Activated CD4-positive, alpha-beta memory T cell treated with anti-CD3 and anti-CD28 coated beads for 36 hours (primary cell): ENCODE measurements at regions of chr12 and their contacts with region 1.

Region 1: DNA sequence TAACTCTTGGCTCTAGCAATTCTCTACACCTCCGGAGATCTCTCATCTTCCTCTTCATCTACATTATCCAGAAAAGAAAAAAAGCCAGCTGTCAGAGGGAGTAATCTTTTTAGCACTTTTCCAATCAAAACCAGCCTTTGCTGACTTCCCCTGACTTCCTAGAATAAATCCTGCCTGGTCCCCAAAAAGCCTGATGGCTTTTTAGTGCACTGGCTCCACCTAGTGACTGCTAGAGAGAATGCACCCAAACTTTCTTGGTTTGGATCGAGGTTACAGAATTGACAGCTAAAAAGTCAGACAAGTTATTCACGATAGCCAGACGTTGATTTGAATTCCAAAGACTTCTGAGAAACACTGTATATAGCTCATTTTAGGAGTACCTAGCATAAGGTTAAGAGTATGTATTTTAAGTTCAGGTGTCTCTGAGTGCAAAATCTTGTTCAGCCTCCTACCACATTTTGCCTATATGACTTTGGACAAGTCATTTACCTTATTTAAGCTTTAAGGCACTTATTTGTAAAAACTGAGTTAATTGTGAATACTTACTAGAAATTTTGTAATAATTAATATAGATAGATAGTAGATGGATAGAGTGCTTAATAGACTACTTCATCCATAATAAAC is 185.7 kb upstream of the GRIN2B start:
- DNase-seq: peak; percentile 53
- H3K4me3 Mint-ChIP-seq: no peak overlapping the region
- H3K27ac Mint-ChIP-seq: no peak overlapping the region
- H3K4me1 Mint-ChIP-seq: no peaks in the 10 kb centered on the region
- H3K27me3 Mint-ChIP-seq: peaks cover 4% of the 10 kb centered on the region

Region 2: GRCh38 chr12:13864081-13864673 is 302.9 kb before region 1 on chr12:
- CTCF ChIA-PET with region 1: interaction called, 48 read pairs
- POLR2A ChIA-PET with region 1: no interaction called
- intact Hi-C with region 1: loop called (anchors 1 kb)
- DNase-seq: peak; percentile 67
- H3K4me3 Mint-ChIP-seq: no peak overlapping the region
- H3K27ac Mint-ChIP-seq: no peak overlapping the region
- H3K4me1 Mint-ChIP-seq: no peaks in the 10 kb centered on the region
- H3K27me3 Mint-ChIP-seq: peaks cover 8% of the 10 kb centered on the region

Region 3: DNA sequence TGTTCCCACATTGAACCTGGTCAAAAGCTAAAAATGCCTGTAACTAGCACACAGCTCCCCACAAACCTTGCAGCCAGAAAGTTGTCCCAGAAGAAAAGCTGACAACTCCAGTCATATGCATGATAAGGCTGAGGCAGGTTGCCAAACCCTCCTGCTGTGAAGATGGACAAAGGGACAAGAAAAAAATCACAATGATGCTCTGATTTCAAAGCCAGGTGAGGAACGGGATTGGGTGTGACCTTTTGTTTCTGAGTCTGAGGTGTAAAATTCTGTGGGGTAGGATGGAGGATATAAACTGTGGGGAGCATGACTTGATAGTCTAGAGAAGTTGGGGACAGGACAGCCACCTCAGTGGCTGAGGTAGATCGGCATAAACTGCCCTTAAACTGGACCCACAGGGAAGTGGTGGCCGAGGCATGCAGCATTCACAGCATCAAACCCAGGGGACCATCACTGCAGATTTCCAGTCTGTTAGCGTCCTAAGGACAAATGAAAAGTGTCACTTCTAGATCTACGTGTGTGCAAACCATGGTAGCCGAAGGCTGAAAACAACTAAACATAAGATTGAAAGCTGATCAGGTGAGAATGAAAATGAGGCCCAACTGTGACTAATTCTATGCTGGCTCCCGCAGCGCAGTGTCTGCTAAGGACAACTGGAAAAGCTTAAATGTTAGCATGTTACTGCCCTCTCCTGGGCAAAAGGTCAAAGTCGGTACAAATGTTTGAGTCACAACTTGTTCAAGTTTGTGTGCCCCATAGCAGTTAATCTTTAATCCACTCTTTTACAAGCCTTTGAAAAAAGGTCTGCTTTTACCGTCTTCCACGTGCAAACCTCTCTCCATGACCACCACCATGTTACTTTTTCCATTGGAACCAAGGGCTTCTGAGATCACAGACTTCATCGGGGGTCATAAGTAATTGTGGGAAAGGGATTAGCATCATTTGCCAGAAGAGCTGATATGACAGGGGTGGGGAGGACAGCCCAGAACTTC is 225.6 kb before region 1 on chr12:
- CTCF ChIA-PET with region 1: no interaction called
- POLR2A ChIA-PET with region 1: no interaction called
- intact Hi-C with region 1: no loop called
- DNase-seq: peak; percentile 33
- H3K4me3 Mint-ChIP-seq: no peak overlapping the region
- H3K27ac Mint-ChIP-seq: no peak overlapping the region
- H3K4me1 Mint-ChIP-seq: no peaks in the 10 kb centered on the region
- H3K27me3 Mint-ChIP-seq: peaks cover 12% of the 10 kb centered on the region

Region 4: GRCh38 chr12:14185427-14186192 is 18.5 kb after region 1 on chr12:
- CTCF ChIA-PET with region 1: interaction called, 19 read pairs
- POLR2A ChIA-PET with region 1: no interaction called
- intact Hi-C with region 1: no loop called
- DNase-seq: peak; percentile 24
- H3K4me3 Mint-ChIP-seq: no peak overlapping the region
- H3K27ac Mint-ChIP-seq: no peak overlapping the region
- H3K4me1 Mint-ChIP-seq: no peaks in the 10 kb centered on the region
- H3K27me3 Mint-ChIP-seq: peaks cover 6% of the 10 kb centered on the region

Region 5: DNA sequence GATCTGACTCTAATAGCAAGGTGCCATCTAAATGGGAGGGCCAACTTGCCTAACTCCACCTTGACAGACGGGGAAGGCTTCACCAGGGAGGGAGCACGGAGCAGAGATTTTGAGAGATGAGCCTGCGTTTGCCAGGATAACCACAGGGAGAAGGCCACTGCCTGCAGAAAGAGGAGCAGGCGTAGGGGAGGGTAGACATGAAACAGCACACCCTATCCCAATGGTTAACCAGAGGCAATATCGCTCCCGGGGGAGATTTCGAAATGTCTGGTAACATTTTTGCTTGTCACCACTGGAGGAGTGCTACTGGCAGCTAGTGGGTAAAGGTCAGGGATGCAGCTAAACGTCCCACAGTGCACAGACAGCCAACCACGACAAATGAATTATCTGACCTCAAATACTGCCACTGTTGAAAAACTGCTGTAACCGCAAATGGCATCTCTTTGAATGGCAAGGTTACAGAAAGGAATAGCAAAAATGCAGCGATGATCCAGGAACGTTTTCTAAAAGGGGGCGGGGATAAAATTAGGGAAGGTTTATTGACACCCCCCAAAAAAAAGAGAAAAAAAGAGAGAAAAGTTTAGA is 72.3 kb after region 1 on chr12:
- CTCF ChIA-PET with region 1: no interaction called
- POLR2A ChIA-PET with region 1: no interaction called
- intact Hi-C with region 1: no loop called
- DNase-seq: peak; percentile 62
- H3K4me3 Mint-ChIP-seq: peak overlapping the region; percentile 69
- H3K27ac Mint-ChIP-seq: peak overlapping the region; percentile 74
- H3K4me1 Mint-ChIP-seq: peaks cover 24% of the 10 kb centered on the region
- H3K27me3 Mint-ChIP-seq: no peaks in the 10 kb centered on the region